Activated B cell treated with CpG ODN at 0.5 μM for 24 hours (primary cell): ENCODE measurements at regions of chr21 and their contacts with region 1.

Region 1: DNA sequence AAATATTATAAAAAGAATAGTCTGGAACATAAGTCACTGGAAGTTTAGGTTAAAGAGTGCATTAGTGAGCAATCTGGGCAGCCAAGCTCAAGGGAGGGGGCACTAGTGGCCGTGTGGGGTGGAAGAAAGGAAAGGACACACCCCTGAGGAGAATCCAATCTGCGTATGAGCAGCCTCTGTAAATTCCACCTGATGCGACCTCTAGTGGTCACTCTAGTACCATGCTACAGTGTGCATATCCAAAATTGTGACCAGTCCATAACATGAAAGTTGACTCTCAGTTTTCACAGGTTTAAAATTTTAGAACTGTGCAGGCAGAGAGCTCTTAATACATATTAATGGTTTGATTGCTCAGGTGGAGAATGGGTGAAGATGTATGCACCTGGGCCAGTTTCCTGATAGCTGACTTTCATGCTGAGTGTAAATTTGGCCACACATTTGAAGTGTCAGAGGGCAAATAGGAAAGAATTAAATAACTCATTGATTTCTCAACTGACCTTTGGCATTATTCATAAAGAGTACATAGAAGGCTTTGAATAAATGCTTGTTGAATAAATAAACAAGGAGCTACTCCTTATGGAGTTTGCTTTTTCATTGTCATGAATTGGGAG is 105.9 kb upstream of the C21orf91 start:
- DNase-seq: no peak
- ATAC-seq: peak; percentile 92
- H3K4me3 Mint-ChIP-seq: no peak overlapping the region
- H3K27ac Mint-ChIP-seq: no peak overlapping the region
- H3K4me1 Mint-ChIP-seq: no peaks in the 10 kb centered on the region
- H3K27me3 Mint-ChIP-seq: no peaks in the 10 kb centered on the region
- CTCF ChIP-seq: no peak

Region 2: GRCh38 chr21:17387030-17387617 is 538.0 kb before region 1 on chr21:
- CTCF ChIA-PET with region 1: interaction called, 4 read pairs
- POLR2A ChIA-PET with region 1: no interaction called
- intact Hi-C with region 1: loop called (anchors 2 kb)
- DNase-seq: no peak
- ATAC-seq: peak; percentile 25
- H3K4me3 Mint-ChIP-seq: no peak overlapping the region
- H3K27ac Mint-ChIP-seq: no peak overlapping the region
- H3K4me1 Mint-ChIP-seq: no peaks in the 10 kb centered on the region
- H3K27me3 Mint-ChIP-seq: no peaks in the 10 kb centered on the region
- CTCF ChIP-seq: peak; percentile 42

Region 3: GRCh38 chr21:17673261-17674010 is 251.7 kb before region 1 on chr21:
- CTCF ChIA-PET with region 1: interaction called, 10 read pairs
- POLR2A ChIA-PET with region 1: no interaction called
- intact Hi-C with region 1: no loop called
- DNase-seq: no peak
- ATAC-seq: no peak
- H3K4me3 Mint-ChIP-seq: no peak overlapping the region
- H3K27ac Mint-ChIP-seq: no peak overlapping the region
- H3K4me1 Mint-ChIP-seq: no peaks in the 10 kb centered on the region
- H3K27me3 Mint-ChIP-seq: peaks cover 2% of the 10 kb centered on the region
- CTCF ChIP-seq: no peak

Region 4: GRCh38 chr21:17679002-17679600 is 246.0 kb before region 1 on chr21:
- CTCF ChIA-PET with region 1: interaction called, 25 read pairs
- POLR2A ChIA-PET with region 1: no interaction called
- intact Hi-C with region 1: loop called (anchors 1 kb)
- DNase-seq: no peak
- ATAC-seq: peak; percentile 81
- H3K4me3 Mint-ChIP-seq: no peak overlapping the region
- H3K27ac Mint-ChIP-seq: no peak overlapping the region
- H3K4me1 Mint-ChIP-seq: no peaks in the 10 kb centered on the region
- H3K27me3 Mint-ChIP-seq: no peaks in the 10 kb centered on the region
- CTCF ChIP-seq: peak; percentile 44

Region 5: GRCh38 chr21:17903029-17903806 is 21.9 kb before region 1 on chr21:
- CTCF ChIA-PET with region 1: interaction called, 12 read pairs
- POLR2A ChIA-PET with region 1: no interaction called
- intact Hi-C with region 1: no loop called
- DNase-seq: no peak
- ATAC-seq: peak; percentile 37
- H3K4me3 Mint-ChIP-seq: no peak overlapping the region
- H3K27ac Mint-ChIP-seq: no peak overlapping the region
- H3K4me1 Mint-ChIP-seq: peaks cover 6% of the 10 kb centered on the region
- H3K27me3 Mint-ChIP-seq: no peaks in the 10 kb centered on the region
- CTCF ChIP-seq: no peak

Region 6: DNA sequence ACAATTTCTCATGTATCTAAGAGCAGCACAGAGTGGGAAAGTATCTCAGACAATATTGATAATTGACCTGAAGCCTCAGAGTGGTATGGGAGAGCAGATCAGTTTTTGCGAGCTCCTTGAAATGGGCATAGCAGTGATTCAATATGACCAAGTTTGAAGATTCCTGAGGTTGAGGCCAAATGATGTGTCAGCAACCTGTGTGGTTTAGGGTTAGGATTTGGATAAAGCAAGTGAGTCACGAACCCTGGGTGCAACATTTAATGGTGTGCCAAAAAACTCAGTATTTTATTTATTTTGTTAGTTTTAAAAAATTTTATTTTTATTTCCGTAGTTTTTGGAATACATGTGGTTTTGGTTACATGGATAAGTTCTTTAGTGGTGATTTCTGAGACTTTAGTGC is 13.5 kb before region 1 on chr21:
- CTCF ChIA-PET with region 1: interaction called, 10 read pairs
- POLR2A ChIA-PET with region 1: no interaction called
- intact Hi-C with region 1: no loop called
- DNase-seq: no peak
- ATAC-seq: no peak
- H3K4me3 Mint-ChIP-seq: no peak overlapping the region
- H3K27ac Mint-ChIP-seq: no peak overlapping the region
- H3K4me1 Mint-ChIP-seq: no peaks in the 10 kb centered on the region
- H3K27me3 Mint-ChIP-seq: peaks cover 5% of the 10 kb centered on the region
- CTCF ChIP-seq: no peak

Region 7: DNA sequence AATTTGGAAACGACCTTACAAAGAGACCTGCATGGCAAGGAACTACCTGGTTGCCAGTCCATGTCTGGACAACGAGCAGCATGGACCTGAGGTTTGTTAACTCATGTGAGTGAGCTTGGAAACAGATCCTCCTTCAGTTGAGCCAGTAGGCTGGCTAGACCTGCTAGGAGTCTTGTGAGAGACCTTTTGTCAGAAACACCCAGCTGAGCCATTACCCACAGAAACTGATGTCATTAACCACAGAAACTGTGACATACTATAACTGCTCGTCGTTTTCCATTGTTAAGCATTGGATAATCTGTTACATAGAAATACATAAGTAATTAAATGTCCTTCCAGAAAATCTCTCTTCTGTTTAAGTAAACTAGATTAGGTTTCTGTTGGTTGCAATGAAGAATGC is 105.1 kb after region 1 on chr21:
- CTCF ChIA-PET with region 1: no interaction called
- POLR2A ChIA-PET with region 1: no interaction called
- intact Hi-C with region 1: no loop called
- DNase-seq: no peak
- ATAC-seq: no peak
- H3K4me3 Mint-ChIP-seq: no peak overlapping the region
- H3K27ac Mint-ChIP-seq: no peak overlapping the region
- H3K4me1 Mint-ChIP-seq: no peaks in the 10 kb centered on the region
- H3K27me3 Mint-ChIP-seq: no peaks in the 10 kb centered on the region
- CTCF ChIP-seq: no peak